ENCODE measurements at regions of chr4 and their contacts with region 1.

Region 1: DNA sequence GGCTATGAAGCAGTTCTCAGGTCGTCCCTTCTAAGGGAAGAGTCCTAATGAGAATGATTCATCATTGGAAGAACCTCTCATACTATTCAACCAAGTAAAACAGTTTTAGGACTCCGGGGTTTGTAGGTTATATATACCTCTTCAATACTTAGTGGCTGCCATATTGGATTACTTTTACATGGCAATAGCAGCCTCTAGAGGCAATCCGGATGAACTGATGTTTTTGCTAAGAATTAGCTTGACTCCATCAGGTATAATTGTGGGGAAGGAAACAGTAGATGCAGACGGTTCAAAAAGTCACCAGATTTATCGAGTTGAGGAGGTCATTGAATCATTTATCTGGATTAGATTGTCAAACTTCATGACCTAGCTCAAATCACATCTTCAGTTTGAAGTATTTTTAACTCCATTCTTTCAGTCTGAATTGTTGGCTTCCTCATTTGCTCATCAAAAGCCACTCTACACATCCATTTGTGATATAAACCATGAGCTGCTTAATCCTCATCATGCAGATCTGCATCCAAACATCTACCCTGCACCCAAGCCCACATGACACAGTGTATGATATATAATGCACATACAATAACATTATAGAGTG is 28.4 kb downstream of the GUCY1B1 start:
- DNase-seq: no peak
- ATAC-seq: peak; percentile 92

Region 2: DNA sequence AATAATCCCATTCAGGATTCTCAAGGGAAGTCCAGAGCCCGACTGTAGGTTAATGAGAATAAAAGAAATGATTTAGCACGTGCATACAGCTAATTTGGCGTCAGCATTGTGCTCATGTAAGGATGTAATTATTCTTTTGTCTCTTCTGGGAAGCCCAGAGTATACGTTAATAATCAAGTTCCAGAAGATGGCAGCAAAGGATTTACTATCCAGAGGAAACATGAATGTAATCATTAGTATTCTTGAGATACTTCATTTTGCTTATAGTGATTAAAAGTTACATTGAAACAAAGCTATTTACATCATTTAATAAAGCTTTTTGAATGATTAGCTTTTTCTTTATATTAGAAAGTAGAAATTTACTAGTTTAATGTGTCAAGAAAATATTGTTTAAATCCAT is 383.3 kb before region 1 on chr4:
- intact Hi-C with region 1: loop called (anchors 10 kb)
- DNase-seq: no peak
- ATAC-seq: peak; percentile 84

Region 3: DNA sequence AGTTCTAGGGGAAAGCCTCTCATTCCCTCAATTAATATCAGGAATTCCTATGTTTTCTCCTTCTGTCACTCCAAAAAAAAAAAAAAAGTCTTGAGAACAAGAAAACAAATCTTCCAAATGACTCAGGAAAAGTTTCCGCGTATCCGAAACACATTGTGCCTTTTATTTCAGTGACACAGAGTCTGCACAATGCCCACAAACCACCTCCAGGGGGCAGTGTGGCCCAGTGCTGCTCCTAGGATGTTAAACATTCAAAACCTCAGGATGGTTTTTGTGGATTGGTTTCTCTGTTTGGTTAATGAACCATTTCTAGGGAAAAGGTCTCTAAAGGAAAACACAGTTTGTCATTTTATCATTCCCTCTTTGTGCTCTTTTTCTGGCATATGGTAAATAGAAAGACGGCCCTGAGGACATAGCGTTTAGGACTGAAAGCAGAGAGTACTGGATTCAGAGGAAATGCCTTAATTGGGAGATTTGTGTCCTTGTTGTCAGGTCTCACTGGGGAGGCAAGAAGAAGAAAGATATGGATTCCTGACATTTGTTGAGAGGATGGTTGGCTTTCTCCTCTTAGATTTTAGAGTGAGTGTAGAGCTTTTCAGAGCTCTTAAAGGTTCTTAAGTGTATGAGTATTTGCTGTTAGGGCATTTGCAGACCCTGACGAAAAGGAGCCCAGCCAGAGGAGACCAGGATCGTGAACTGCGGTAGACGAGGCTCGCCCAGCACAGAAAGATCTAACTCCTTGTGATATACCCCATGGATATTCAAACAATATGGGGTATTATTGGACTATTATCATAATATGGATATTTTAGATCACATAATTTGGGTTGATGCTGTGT is 344.7 kb before region 1 on chr4:
- intact Hi-C with region 1: loop called (anchors 5 kb)
- DNase-seq: peak; percentile 90
- ATAC-seq: peak; percentile 96

Region 4: DNA sequence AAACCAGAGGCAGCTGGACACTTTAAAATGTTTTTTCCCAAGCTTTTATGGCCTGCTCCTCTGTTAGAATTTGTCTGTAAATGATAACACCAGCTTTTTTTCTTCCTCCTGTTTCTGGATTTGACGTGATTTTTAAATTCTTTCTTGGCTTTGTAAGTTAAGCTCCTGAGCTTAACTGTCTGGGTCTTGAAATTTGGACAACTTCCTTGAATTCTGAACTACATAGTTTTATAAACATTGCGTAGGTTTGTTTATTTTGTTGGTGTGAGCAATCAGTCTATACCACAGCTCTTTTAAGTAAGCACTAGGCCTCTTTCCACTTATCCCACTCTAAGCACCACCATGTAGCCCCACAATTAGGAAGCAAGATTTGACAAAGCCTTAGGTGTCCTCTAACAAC is 265.0 kb before region 1 on chr4:
- intact Hi-C with region 1: no loop called
- DNase-seq: no peak
- ATAC-seq: no peak

Measured in Right ventricle myocardium superior (tissue), 1 donor.